Activated naive CD4-positive, alpha-beta T cell treated with anti-CD3 and anti-CD28 coated beads, Interleukin-2, amount 10 ng/mL, durations not matched to agents 7 days and 5 days (primary cell): ENCODE measurements at regions of chr7 and their contacts with region 1.

Region 1: DNA sequence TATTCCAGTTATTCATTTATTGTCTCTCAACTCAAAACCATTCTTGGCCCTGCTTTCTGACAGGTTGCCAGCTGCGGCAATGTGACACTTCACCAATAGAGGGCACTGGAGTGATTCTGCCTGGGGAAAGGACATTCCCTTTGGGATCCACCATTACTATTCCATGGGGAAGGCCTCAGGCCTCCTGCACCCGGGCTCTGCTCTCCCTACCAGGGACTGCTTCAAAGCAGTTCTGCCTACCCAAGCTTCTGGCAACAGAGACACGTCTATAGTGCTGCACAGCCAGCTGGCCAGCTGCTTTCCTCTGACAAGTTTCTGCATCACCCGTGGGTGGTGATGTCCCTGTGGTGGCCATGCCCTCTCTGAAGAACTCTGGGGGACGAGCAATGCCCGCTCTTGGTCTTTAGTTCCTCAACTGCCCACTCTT is 163.8 kb downstream of the ELMO1 start:
- DNase-seq: peak; percentile 52
- H3K4me3 Mint-ChIP-seq: no peak overlapping the region
- H3K27ac Mint-ChIP-seq: no peak overlapping the region
- H3K4me1 Mint-ChIP-seq: peaks cover 31% of the 10 kb centered on the region
- H3K27me3 Mint-ChIP-seq: no peaks in the 10 kb centered on the region

Region 2: GRCh38 chr7:37128327-37129034 is 156.3 kb before region 1 on chr7:
- CTCF ChIA-PET with region 1: no interaction called
- DNase-seq: no peak
- H3K4me3 Mint-ChIP-seq: no peak overlapping the region
- H3K27ac Mint-ChIP-seq: no peak overlapping the region
- H3K4me1 Mint-ChIP-seq: no peaks in the 10 kb centered on the region
- H3K27me3 Mint-ChIP-seq: no peaks in the 10 kb centered on the region

Region 3: GRCh38 chr7:37269711-37270508 is 14.9 kb before region 1 on chr7:
- CTCF ChIA-PET with region 1: interaction called, 12 read pairs
- DNase-seq: no peak
- H3K4me3 Mint-ChIP-seq: no peak overlapping the region
- H3K27ac Mint-ChIP-seq: peak overlapping the region; percentile 21
- H3K4me1 Mint-ChIP-seq: peaks cover 43% of the 10 kb centered on the region
- H3K27me3 Mint-ChIP-seq: no peaks in the 10 kb centered on the region

Region 4: DNA sequence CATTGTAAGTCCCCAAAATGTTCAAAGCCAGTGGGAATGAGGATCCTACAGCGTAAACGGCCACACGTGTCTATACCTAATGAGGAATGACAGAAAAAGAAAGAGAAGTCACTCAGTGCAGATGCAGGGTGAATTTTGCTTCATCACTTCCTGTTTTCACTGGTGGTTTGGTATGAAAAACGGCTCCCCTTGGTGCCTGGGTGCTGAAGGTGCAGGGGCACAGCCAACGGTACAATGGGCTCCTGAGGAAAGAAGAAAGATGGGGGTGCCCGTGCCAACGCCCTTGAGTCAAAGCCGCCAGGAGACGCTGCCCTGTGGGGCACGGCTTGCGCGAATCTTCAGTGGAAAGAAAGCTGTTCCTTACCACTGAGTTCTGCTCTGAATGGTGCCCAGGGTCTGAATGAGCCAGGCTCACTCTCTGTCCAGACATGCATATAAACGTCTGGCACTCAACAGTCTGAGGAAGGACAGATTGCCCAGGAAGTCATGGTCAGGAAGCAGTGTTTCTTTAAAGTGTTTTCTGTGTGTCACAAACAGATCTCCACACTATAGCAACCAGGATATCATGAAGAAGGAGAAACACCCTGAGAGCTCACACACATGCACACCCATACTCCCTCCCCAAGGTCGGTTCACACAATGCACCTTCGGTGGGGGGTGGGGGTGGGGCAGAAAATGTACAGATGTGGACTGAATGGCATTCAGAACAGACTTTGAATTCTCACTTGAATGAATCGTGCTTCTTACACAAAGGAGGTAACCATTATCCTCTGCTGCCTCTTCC is 58.1 kb after region 1 on chr7:
- CTCF ChIA-PET with region 1: interaction called, 46 read pairs
- DNase-seq: peak; percentile 82
- H3K4me3 Mint-ChIP-seq: peak overlapping the region; percentile 89
- H3K27ac Mint-ChIP-seq: peak overlapping the region; percentile 96
- H3K4me1 Mint-ChIP-seq: peaks cover 87% of the 10 kb centered on the region
- H3K27me3 Mint-ChIP-seq: no peaks in the 10 kb centered on the region

Region 5: DNA sequence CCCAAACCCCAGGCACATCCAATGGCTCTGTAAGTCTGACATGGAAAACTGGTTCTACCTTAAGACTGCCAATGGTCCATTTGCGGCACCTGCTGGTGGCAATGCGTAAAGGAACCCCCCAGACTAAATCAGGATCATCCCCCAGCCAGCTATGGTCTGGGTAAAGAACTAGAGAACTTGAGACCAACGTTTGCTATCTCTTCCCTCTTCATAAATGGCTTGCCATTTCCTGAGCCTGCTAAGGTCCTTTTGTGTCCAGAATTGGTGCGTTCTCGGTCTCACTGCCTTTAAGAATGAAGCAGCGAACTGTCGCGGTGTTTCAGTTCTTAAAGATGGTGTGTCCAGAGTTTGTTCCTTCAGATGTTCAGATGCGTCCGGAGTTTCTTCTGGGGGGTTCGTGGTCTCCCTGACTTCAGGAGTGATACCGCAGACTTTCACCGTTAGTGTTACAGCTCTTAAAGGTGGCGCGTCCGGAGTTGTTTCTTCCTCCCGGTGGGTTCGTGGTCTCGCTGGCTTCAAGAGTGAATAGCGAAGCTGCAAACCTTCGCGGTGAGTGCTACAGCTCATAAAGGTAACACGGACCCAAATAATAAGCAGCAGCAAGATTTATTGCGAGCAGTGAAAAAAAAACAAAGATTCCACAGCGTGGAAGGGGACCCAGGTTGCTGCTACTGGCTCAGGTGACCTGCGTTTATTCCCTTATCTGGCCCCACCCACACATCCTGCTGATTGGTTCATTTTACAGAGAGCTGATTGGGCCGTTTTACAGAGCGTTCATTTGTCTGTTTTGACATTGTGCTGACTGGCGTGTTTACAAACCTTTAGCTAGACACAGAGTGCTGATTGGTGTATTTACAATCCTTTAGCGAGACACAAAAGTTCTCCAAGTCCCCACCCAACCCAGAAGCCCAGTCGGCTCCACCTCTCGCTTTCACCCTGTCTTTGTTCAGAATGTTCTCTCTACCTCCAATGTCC is 68.4 kb after region 1 on chr7:
- CTCF ChIA-PET with region 1: interaction called, 35 read pairs
- DNase-seq: peak; percentile 81
- H3K4me3 Mint-ChIP-seq: peak overlapping the region; percentile 91
- H3K27ac Mint-ChIP-seq: peak overlapping the region; percentile 97
- H3K4me1 Mint-ChIP-seq: peaks cover 84% of the 10 kb centered on the region
- H3K27me3 Mint-ChIP-seq: no peaks in the 10 kb centered on the region

Region 6: GRCh38 chr7:37432281-37432920 is 147.6 kb after region 1 on chr7:
- CTCF ChIA-PET with region 1: no interaction called
- DNase-seq: peak; percentile 33
- H3K4me3 Mint-ChIP-seq: no peak overlapping the region
- H3K27ac Mint-ChIP-seq: peak overlapping the region; percentile 53
- H3K4me1 Mint-ChIP-seq: peaks cover 56% of the 10 kb centered on the region
- H3K27me3 Mint-ChIP-seq: no peaks in the 10 kb centered on the region

Region 7: DNA sequence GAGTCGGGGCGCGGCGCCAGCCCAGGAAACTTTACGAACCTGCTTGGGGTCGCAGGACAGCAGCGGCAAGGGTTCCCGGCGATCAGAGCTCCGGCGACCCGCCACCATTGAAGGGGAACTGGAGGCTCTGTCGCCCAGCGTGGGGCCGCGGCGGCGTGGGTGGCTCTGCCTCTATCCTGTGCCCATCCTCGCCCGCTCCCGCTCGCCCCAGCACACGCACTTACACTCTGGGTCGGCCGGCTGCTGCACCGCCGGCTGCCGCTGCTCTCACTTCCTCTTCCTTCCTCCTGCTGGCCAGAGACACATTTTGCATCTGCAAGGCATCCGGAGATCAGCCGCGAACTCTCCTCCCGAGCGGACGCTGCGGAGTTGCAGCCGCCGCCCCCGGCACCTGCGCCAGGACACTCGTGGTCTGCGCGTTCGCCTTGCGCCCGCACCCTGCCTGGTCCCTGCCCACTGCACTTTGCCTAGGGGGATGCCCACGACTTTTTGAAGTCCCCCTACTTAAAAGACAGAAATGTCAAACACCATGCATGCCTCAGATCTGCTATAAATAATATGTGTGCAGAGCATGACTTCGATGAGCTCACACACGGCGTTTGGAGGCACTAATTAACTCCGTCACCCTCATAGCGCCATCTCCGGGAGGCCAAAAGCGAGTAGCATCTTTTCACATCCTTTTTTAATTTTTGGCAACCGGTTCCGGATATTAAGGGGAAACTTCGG is 164.0 kb after region 1 on chr7 and contains the start of gene ELMO1:
- CTCF ChIA-PET with region 1: interaction called, 20 read pairs
- DNase-seq: peak; percentile 89
- H3K4me3 Mint-ChIP-seq: peak within 1 kb of the TSS; percentile 88
- H3K27ac Mint-ChIP-seq: peak within 1 kb of the TSS; percentile 95
- H3K4me1 Mint-ChIP-seq: peaks cover 63% of the 10 kb centered on the region
- H3K27me3 Mint-ChIP-seq: peaks cover 19% of the 10 kb centered on the region

Region 8: DNA sequence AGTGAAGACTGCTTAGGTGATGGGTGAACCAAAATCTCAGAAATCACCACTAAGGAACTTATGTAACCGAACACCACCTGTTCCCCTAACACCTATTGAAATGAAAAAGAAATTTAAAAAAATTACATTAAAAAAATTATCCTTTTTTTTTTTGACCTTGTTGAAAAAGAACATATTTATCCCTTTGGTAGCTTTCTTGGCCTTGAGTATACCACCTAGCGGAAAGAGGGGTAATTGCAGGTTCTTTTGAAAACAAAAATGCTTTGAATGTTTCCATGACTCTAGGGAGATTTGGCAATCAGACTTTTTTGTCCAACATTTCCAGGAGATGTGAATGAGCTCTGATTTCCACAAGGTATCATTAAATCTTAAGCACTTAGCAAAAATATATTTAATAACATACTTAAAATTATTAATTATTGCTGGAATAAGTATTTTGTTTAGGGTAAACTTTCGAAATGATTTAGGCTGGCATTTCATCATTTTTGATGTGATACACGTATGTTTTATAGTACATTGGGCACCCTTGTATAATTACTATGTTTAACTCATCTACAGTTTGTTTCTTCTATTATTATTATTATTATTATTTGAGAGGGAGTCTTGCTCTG is 210.9 kb after region 1 on chr7:
- CTCF ChIA-PET with region 1: interaction called, 17 read pairs
- DNase-seq: no peak
- H3K4me3 Mint-ChIP-seq: no peak overlapping the region
- H3K27ac Mint-ChIP-seq: no peak overlapping the region
- H3K4me1 Mint-ChIP-seq: peaks cover 8% of the 10 kb centered on the region
- H3K27me3 Mint-ChIP-seq: no peaks in the 10 kb centered on the region

Region 9: DNA sequence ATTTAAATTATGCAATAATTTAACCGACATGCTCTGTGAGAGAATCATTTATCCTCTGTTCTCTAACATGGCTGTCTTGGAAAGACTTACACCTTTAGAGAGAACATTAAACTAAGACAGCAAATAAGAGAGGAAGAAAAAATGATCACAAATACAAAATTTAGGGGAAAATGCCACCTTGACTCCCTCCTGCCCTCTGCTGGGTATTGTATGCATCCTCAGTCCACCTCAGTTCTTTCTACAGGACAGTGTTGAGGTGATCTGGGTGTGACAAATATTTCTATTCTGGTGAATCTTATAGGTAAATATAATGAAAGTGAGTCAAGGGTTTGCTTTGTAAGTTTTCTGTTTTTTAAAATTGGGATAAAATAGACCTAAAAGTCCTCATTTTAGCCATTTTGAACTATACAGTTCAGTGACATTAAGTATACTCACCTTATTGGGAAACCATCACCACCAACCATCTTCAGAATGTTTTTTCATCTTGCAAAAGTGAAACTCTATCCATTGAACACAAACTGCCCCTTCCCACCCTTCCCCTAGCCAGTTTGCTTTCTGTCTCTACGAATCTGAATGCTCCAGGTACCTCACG is 225.3 kb after region 1 on chr7:
- CTCF ChIA-PET with region 1: interaction called, 12 read pairs
- DNase-seq: peak; percentile 34
- H3K4me3 Mint-ChIP-seq: no peak overlapping the region
- H3K27ac Mint-ChIP-seq: no peak overlapping the region
- H3K4me1 Mint-ChIP-seq: no peaks in the 10 kb centered on the region
- H3K27me3 Mint-ChIP-seq: peaks cover 15% of the 10 kb centered on the region